AG04449 (cell line): ENCODE measurements at regions of chr17 and their contacts with region 1.

Region 1: DNA sequence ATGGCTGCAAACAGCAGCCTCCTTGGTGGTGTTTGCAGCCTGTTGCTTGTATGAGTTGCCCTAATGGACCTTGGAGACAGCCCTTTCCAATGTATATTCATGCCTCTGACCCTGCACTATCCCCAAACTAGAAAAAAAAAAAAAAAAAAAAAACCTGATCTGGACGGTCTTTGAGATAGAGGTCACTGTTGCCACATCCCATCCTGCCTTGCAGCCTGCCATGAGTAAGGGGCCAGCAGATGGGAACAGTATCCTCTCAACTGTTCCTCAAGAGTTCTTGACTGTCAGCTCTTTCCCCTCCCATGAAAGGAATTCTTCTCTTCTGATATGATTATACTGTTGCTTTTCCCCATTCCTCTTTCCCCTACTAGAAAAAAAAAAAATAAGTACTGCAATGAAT is 152.4 kb downstream of the SSH2 start:
- DNase-seq: no peak
- H3K4me3 ChIP-seq: no peak overlapping the region
- CTCF ChIP-seq: no peak

Region 2: DNA sequence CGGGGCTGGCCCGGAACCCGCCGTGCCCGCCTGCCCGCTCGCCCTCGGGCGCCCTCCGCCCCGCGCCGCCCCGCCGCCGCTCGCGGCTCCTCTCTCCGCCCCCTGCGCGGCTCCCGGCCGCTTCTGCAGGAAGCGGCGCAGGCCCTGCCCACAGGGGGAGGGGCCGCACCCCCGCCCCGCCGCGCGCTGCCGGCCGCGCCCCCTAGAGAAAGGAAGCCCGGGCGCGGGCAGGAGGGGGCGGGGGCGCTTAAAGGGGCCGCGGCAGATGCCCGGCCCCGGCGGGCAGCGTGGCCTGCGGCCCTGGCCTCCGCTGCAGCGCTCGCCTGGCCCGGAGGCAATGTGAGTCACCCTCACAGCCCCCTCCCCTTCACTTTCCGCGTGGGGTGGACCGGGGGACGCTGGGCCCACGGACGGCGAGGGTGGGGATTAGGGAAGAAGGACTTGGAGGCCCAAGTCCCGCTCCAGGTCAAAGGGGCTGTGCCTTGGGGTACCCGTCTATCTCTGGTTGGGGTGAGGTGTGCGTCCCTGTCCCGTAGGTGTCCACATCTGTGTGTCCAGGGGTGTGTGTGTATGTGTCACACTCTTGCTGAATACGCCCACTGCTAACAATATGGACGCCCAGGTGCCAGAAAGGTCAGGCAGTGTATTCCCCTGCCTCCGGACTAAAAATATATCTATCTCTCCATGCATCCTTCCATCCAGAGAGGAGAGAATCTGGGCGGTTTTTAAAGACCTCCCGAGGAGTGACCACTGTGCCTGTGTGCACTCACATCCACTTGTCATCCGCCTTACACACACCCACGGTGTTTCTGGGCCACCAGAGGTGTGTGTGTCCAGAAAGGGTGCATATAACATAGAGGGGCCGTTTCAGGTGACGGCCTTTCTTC is 187.9 kb before region 1 on chr17 and contains the start of gene GIT1:
- CTCF ChIA-PET with region 1: interaction called, 10 read pairs
- POLR2A ChIA-PET with region 1: no interaction called
- DNase-seq: no peak
- H3K4me3 ChIP-seq: peak within 1 kb of the TSS; percentile 82
- CTCF ChIP-seq: no peak

Region 3: DNA sequence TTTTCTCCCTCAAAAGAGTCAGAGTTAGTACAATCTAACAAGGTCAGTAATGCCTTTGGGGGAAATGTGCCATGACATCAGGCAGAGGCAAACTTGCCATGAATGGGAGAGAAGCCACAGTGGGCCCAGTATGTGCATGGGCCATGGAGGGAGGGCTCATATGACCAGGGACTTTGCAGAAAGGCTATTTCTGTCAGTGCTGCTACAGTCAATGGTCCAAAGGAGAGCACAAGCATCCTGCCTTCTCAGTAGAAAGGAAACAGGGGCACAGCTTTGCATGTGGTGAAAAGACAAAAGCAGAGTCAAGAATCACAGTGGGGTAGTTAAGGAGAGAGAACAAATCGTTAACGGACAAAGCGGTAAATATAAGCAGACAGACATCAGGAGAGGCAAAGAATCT is 143.8 kb before region 1 on chr17:
- CTCF ChIA-PET with region 1: interaction called, 170 read pairs
- POLR2A ChIA-PET with region 1: no interaction called
- DNase-seq: no peak
- H3K4me3 ChIP-seq: no peak overlapping the region
- CTCF ChIP-seq: no peak

Region 4: GRCh38 chr17:29722411-29723198 is 55.1 kb before region 1 on chr17:
- CTCF ChIA-PET with region 1: interaction called, 11 read pairs
- POLR2A ChIA-PET with region 1: no interaction called
- DNase-seq: no peak
- H3K4me3 ChIP-seq: no peak overlapping the region
- CTCF ChIP-seq: no peak

Region 5: GRCh38 chr17:29789196-29790170 is 11.8 kb after region 1 on chr17:
- CTCF ChIA-PET with region 1: interaction called, 46 read pairs
- POLR2A ChIA-PET with region 1: no interaction called
- DNase-seq: no peak
- H3K4me3 ChIP-seq: no peak overlapping the region
- CTCF ChIP-seq: no peak

Region 6: DNA sequence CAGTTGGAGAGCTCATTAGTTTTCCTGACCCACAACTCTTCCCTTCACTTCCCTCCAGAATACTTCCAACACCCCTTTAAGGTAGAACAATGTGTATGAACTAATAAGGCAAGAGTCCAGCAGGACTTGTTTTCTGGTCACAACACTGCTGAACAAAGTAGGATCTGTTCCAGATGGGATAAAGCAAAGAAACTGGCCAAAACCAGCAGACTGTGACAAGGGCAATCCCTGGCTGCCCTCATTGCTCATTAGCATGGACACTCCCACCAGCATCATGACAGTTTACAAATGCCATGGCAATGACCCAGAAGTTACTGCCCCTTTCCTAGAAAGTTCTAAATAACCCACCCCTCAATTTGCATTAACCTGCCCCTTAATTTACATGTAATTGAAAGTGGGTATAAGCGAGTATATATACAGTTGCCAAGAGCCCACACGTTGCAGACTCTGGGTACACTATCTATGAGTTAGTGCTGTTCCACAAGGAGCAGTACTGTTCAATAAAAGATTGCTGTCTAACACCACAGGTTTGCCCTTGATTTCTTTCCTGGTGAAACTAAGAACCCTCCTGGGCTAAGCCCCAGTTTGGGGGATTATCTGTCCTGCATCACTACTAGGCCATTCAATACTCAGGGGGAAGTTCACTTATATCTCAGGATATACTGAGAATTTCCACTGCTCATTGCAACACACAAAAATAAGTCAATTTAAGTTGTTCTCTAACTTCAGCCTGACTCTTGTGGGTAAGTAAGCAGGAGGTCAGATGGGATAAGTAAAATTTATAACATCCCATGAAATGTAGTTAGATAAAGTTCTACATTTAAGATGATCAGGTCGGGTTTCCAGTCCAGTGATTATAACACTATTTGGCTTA is 70.1 kb after region 1 on chr17:
- CTCF ChIA-PET with region 1: no interaction called
- POLR2A ChIA-PET with region 1: no interaction called
- DNase-seq: no peak
- H3K4me3 ChIP-seq: no peak overlapping the region
- CTCF ChIP-seq: no peak